ENCODE measurements at regions of chr2 and their contacts with region 1.

Region 1: GRCh38 chr2:196798980-196799379 is 503 bp downstream of the GTF3C3 start:
- DNase-seq: no peak
- H3K4me3 ChIP-seq: peak overlapping the region; percentile 96
- H3K27ac ChIP-seq: peak overlapping the region; percentile 39; the same call in 1 of the 2 replicates
- H3K4me1 ChIP-seq: peaks cover 17% of the 10 kb centered on the region
- H3K27me3 ChIP-seq: no peaks in the 10 kb centered on the region
- CTCF ChIP-seq: no peak

Region 2: DNA sequence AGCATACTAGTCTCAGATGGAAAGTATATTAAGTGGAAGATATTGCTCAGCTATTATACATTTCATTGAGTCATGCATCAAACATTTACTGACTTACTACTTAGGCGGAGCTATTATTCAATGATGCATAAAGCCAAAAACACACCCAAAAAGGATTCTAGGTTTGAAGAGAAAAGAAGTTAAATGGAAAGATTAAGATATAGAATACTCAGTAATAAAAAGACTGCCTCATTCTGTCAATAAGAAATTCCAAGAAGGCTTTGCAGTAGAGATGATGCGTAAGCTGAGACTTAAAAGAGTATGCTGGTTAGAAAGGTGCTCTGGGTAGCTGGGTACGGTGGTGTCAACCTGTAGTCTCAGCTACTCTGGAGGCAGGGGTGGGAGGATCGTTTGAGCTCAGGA is 655.2 kb before region 1 on chr2:
- CTCF ChIA-PET with region 1: no interaction called
- POLR2A ChIA-PET with region 1: interaction called, 22 read pairs
- intact Hi-C with region 1: no loop called
- DNase-seq: no peak
- H3K4me3 ChIP-seq: no peak overlapping the region
- H3K27ac ChIP-seq: no peak overlapping the region
- H3K4me1 ChIP-seq: no peaks in the 10 kb centered on the region
- H3K27me3 ChIP-seq: no peaks in the 10 kb centered on the region
- CTCF ChIP-seq: no peak

Region 3: GRCh38 chr2:196677406-196677805 is 121.6 kb before region 1 on chr2:
- CTCF ChIA-PET with region 1: no interaction called
- POLR2A ChIA-PET with region 1: no interaction called
- intact Hi-C with region 1: no loop called
- DNase-seq: no peak
- H3K4me3 ChIP-seq: no peak overlapping the region
- H3K27ac ChIP-seq: no peak overlapping the region
- H3K4me1 ChIP-seq: no peaks in the 10 kb centered on the region
- H3K27me3 ChIP-seq: no peaks in the 10 kb centered on the region
- CTCF ChIP-seq: no peak

Region 4: DNA sequence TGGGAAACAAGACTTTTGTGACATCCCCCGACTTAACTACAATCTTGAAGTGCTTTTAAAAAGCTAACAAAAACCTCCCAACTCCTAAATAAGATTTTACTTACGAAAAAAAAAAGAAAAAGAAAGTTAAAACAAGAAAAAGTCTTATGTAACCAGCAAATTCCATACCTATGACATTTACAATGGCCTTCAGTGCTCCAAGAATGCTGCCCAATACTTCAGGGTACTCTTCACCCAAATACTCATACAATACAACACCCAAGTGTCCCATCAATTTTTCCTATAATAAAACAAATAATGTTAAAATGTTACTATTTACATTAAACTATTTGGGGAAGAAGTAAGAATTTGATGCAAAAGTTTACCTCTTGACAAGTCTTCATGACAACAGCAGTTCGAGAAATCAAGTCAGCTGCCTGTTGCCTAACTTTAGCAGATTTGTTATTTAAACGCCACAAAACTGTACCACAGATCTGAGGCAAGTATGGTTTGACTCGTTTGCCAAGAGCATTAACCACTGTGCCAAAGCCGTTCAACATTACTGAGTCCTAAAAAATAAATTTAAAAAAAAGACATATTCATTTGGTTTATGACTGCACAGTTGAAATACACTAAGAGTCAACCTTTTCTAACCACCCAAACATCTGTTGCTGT is 601.0 kb after region 1 on chr2:
- CTCF ChIA-PET with region 1: no interaction called
- POLR2A ChIA-PET with region 1: no interaction called
- intact Hi-C with region 1: loop called (anchors 10 kb)
- DNase-seq: no peak
- H3K4me3 ChIP-seq: no peak overlapping the region
- H3K27ac ChIP-seq: no peak overlapping the region
- H3K4me1 ChIP-seq: no peaks in the 10 kb centered on the region
- H3K27me3 ChIP-seq: no peaks in the 10 kb centered on the region
- CTCF ChIP-seq: no peak

Measured in PC-9 (cell line).